ENCODE measurements at regions of chr5 and their contacts with region 1.

Region 1: DNA sequence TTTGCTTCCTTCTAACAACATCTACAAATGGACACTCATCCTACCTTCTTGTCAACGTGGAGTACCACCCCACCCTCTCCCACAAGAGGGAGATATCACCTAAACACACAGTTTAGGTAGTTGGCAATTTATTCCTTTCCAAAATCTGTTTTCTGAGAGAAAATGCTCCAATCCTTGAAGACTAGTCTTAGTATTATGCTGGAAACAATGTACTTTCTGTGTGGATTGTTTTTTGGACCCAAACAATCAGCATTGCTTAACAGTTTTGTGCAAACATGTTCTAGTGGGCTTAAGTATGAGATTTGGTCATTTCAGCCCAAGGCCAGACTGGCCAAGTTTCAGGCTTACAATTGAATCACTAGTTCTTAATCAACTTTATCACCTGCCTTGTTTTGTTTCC is 359.1 kb downstream of the ARHGEF28 start:
- DNase-seq: peak; percentile 62
- ATAC-seq: peak; percentile 70
- H3K4me3 ChIP-seq: no peak overlapping the region
- H3K27ac ChIP-seq: no peak overlapping the region
- H3K4me1 ChIP-seq: no peaks in the 10 kb centered on the region
- H3K27me3 ChIP-seq: no peaks in the 10 kb centered on the region
- CTCF ChIP-seq: peak; percentile 81

Region 2: GRCh38 chr5:74056789-74057164 is 71.6 kb after region 1 on chr5:
- CTCF ChIA-PET with region 1: no interaction called
- POLR2A ChIA-PET with region 1: no interaction called
- intact Hi-C with region 1: loop called (anchors 5 kb)
- DNase-seq: peak; percentile 51
- ATAC-seq: peak; percentile 81
- H3K4me3 ChIP-seq: no peak overlapping the region
- H3K27ac ChIP-seq: no peak overlapping the region
- H3K4me1 ChIP-seq: peaks cover 4% of the 10 kb centered on the region; the same call in 1 of the 2 replicates
- H3K27me3 ChIP-seq: no peaks in the 10 kb centered on the region
- CTCF ChIP-seq: peak; percentile 64

Region 3: DNA sequence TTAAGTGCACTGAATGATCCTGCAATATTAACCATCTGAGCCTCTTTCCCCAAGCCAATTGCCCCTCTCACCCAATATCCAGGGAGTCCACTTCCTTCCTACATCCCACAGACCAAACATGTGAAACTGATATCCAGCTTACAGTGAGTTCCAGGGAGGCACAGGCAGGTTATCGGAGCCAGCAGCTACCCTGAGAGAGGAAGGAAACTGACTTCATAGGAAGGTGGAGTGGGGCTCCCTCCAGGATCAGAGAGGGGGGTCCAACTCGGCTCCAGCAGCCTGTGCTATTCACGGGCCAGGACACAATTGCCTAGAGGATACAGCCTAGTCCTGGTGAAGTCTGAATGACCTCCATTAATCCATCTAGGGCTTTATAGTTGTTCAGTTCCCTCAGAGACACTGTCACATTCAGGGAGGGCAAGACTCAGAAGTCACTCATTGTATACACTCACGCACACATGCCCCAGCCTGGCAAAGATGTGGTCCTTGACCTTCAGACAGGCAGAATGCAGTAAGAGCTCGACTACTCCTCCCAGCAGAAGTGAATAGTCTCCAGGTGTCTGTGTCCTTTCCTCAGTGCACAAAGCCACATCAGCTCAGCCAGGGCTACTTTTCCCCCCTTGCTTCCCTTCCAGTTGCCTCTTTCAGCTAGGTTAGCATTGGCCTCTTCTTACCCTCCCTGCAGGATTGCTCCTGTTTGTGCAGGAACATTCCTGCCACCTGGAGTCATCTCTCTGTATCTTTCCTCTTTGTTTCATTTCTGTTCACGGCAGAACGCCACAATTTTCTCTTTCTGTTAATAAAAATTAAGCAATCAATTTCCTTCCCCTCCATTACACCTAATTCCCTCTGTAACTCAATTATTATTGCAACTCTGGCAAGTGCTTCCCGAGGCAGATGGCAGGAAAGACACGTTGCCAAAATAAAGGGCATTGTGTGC is 142.5 kb after region 1 on chr5:
- CTCF ChIA-PET with region 1: no interaction called
- POLR2A ChIA-PET with region 1: no interaction called
- intact Hi-C with region 1: loop called (anchors 1 kb)
- DNase-seq: peak; percentile 55
- ATAC-seq: peak; percentile 72
- H3K4me3 ChIP-seq: peak overlapping the region; percentile 63
- H3K27ac ChIP-seq: no peak overlapping the region
- H3K4me1 ChIP-seq: peaks cover 21% of the 10 kb centered on the region
- H3K27me3 ChIP-seq: no peaks in the 10 kb centered on the region
- CTCF ChIP-seq: peak; percentile 51

Region 4: GRCh38 chr5:74648835-74649293 is 663.7 kb after region 1 on chr5:
- CTCF ChIA-PET with region 1: no interaction called
- POLR2A ChIA-PET with region 1: no interaction called
- intact Hi-C with region 1: loop called (anchors 1 kb)
- DNase-seq: peak; percentile 71
- ATAC-seq: peak; percentile 94
- H3K4me3 ChIP-seq: peak overlapping the region; percentile 38; the same call in 1 of the 2 replicates
- H3K27ac ChIP-seq: no peak overlapping the region
- H3K4me1 ChIP-seq: peaks cover 21% of the 10 kb centered on the region
- H3K27me3 ChIP-seq: no peaks in the 10 kb centered on the region
- CTCF ChIP-seq: peak; percentile 81